GM12878 (cell line): ENCODE measurements at regions of chr6 and their contacts with region 1.

Region 1: DNA sequence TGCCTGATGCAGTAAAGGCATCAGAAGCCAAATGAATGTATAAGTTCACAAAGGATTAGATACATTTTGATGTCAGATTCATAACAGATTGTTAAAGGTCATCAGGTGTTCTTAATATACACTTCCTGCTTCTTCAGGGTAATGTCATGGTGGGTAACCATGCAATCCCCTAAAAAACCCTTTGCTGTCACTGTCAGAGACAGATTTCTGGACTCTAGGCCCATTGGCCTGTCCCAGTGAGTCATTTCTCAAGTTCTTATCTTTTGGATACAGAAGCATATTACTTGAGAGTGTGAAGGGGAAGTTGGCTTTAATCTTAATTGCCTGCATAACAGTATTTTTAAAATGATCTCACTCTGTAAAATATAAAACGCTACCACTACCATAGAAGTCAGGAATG is 895.6 kb upstream of the MAP3K7 start:
- DNase-seq: peak; percentile 64
- ATAC-seq: peak; percentile 85
- H3K4me3 ChIP-seq: no peak overlapping the region
- H3K27ac ChIP-seq: peak overlapping the region; percentile 57
- H3K4me1 ChIP-seq: peaks cover 22% of the 10 kb centered on the region; the same call in 1 of the 2 replicates
- H3K27me3 ChIP-seq: no peaks in the 10 kb centered on the region
- CTCF ChIP-seq: no peak
- EP300 ChIP-seq: peak; percentile 69 to 78; a peak in 2 of 4 replicates
- POLR2A ChIP-seq: no peak
- RAD21 ChIP-seq: peak; percentile 3; the same call in 1 of the 2 replicates

Region 2: GRCh38 chr6:91442342-91442741 is 40.2 kb before region 1 on chr6:
- CTCF ChIA-PET with region 1: interaction called, 12 read pairs
- POLR2A ChIA-PET with region 1: interaction called, 10 read pairs
- RAD21 ChIA-PET with region 1: interaction called, 41 read pairs
- SMC1A ChIA-PET with region 1: interaction called, 131 read pairs
- in situ Hi-C with region 1: no loop called
- intact Hi-C with region 1: loop called (anchors 2 kb)
- DNase-seq: no peak
- ATAC-seq: peak; percentile 20; the same call in 1 of the 3 replicates
- H3K4me3 ChIP-seq: no peak overlapping the region
- H3K27ac ChIP-seq: peak overlapping the region; percentile 48
- H3K4me1 ChIP-seq: no peaks in the 10 kb centered on the region
- H3K27me3 ChIP-seq: no peaks in the 10 kb centered on the region
- CTCF ChIP-seq: no peak
- EP300 ChIP-seq: no peak
- POLR2A ChIP-seq: no peak
- RAD21 ChIP-seq: no peak

Region 3: DNA sequence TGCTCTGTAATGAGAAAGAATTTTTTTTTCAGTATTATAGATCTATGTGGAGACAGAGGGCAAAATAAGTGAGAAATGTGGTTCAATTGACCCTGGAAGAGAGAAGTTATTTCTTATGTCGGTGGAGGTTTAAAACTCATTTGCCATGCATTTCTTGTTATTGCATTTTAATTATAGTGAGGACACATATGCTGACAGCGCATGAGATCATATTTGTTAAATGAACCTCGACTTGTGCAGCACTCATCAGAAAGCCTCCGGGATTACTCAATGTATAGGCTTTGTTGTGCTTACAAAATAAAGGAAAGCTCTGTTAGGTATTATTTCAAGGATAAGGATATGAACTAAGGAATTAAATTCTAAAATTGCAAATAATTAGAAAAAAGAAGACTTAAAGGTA is 19.4 kb after region 1 on chr6:
- CTCF ChIA-PET with region 1: no interaction called
- POLR2A ChIA-PET with region 1: interaction called, 9 read pairs
- RAD21 ChIA-PET with region 1: interaction called, 6 read pairs
- SMC1A ChIA-PET with region 1: interaction called, 11 read pairs
- in situ Hi-C with region 1: no loop called
- intact Hi-C with region 1: no loop called
- DNase-seq: no peak
- ATAC-seq: no peak
- H3K4me3 ChIP-seq: no peak overlapping the region
- H3K27ac ChIP-seq: no peak overlapping the region
- H3K4me1 ChIP-seq: no peaks in the 10 kb centered on the region
- H3K27me3 ChIP-seq: no peaks in the 10 kb centered on the region
- CTCF ChIP-seq: no peak
- EP300 ChIP-seq: no peak
- POLR2A ChIP-seq: no peak
- RAD21 ChIP-seq: no peak

Region 4: GRCh38 chr6:91653895-91654294 is 171.4 kb after region 1 on chr6:
- CTCF ChIA-PET with region 1: no interaction called
- POLR2A ChIA-PET with region 1: no interaction called
- RAD21 ChIA-PET with region 1: no interaction called
- SMC1A ChIA-PET with region 1: interaction called, 3 read pairs
- in situ Hi-C with region 1: no loop called
- intact Hi-C with region 1: loop called (anchors 5 kb)
- DNase-seq: no peak
- ATAC-seq: peak; percentile 64
- H3K4me3 ChIP-seq: no peak overlapping the region
- H3K27ac ChIP-seq: no peak overlapping the region
- H3K4me1 ChIP-seq: no peaks in the 10 kb centered on the region
- H3K27me3 ChIP-seq: no peaks in the 10 kb centered on the region
- CTCF ChIP-seq: no peak
- EP300 ChIP-seq: no peak
- POLR2A ChIP-seq: no peak
- RAD21 ChIP-seq: no peak

Region 5: DNA sequence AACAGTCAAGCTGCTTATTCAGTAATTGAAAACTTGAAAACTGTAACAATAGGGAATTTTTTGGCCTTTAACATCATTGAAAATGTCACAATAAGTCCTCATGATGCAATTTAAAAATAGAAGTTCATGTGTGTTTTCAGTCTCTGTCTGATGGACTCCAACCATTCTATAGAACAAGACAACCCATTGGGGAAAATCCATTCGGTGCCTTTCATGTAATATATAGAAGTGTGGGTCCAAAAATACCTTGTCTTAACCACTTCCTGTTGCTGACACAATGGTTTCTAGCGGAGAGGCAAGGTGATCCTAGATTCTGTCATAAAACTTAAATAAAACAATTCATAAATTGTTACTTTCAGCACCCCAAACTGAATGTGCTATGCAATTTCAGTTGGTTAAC is 235.7 kb after region 1 on chr6:
- CTCF ChIA-PET with region 1: no interaction called
- POLR2A ChIA-PET with region 1: interaction called, 4 read pairs
- RAD21 ChIA-PET with region 1: interaction called, 3 read pairs
- SMC1A ChIA-PET with region 1: interaction called, 7 read pairs
- in situ Hi-C with region 1: no loop called
- intact Hi-C with region 1: loop called (anchors 2 kb)
- DNase-seq: no peak
- ATAC-seq: peak; percentile 83
- H3K4me3 ChIP-seq: no peak overlapping the region
- H3K27ac ChIP-seq: no peak overlapping the region
- H3K4me1 ChIP-seq: no peaks in the 10 kb centered on the region
- H3K27me3 ChIP-seq: no peaks in the 10 kb centered on the region
- CTCF ChIP-seq: no peak
- EP300 ChIP-seq: peak; percentile 51 to 52; a peak in 2 of 4 replicates
- POLR2A ChIP-seq: no peak
- RAD21 ChIP-seq: no peak